ENCODE measurements at regions of chr6 and their contacts with region 1.

Region 1: DNA sequence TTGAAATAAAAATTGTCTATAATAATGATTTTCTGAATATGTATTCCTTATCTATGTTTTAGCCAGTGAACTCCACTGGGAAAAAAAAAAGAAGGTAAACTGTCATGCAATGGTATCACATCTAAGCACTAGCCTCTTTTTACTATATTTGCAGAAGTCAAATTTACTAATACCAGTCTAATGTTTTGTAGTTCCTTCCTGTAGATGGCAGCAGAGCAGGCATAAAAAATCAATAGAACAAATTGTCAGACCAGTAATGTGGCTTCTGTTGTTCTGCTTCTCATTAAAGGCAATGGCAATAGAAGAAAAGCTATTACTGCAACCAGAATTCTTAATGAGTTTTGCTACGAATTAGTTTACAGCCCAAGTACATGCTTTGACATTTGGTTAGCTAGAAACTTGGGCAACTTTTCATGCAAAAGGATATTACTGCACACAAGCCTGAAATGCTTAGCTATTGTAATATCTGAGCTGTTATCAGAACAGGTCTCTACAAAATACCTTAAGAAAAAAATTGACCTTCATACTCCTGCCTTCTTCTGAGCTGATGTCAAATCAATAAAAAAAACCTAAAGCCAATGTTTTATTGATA is 476.9 kb downstream of the KHDRBS2 start:
- DNase-seq: peak in 2 of 4 donors; percentile 30 to 58
- ATAC-seq: peak; percentile 69
- H3K4me3 ChIP-seq: no peak overlapping the region
- H3K27ac ChIP-seq: no peak overlapping the region
- H3K4me1 ChIP-seq: no peaks in the 10 kb centered on the region
- H3K27me3 ChIP-seq: no peaks in the 10 kb centered on the region
- CTCF ChIP-seq: peak; percentile 22 to 47

Region 2: GRCh38 chr6:61940919-61941318 is 131.8 kb after region 1 on chr6:
- intact Hi-C with region 1: no loop called
- DNase-seq: no peak
- ATAC-seq: no peak
- H3K4me3 ChIP-seq: no peak overlapping the region
- H3K27ac ChIP-seq: no peak overlapping the region
- H3K4me1 ChIP-seq: no peaks in the 10 kb centered on the region
- H3K27me3 ChIP-seq: no peaks in the 10 kb centered on the region
- CTCF ChIP-seq: no peak

Region 3: DNA sequence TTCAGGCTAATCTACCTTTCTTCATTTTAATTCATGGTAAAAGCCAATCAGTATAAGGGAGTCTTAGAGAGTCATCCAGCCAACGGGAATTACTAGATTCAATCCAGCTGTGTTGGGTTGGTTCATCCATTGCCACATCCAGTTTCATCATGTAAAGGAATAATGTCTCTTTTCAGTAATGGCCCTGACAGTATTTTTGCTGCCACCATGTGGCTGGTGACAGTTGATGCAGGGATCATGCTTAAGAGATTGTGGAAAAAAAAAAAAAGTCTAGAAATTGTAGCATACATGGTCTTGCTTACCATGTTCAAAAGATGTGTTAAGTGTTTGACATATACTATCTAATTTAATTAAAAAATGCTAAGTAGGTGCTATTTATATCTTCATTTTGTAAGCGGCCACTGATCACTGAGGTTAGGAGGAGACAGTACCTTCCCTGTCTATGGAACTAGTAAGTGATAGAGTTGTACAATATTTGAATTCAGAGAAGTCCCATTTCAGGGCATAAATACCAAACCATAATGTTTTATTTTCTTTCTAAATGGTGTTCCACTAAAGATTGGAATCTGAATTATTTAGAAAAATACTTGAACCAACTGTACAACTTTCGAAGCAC is 341.1 kb after region 1 on chr6:
- intact Hi-C with region 1: loop called in 1 of 2 experiments (anchors 10 kb)
- DNase-seq: peak in 1 of 4 donors; percentile 64
- ATAC-seq: peak; percentile 84
- H3K4me3 ChIP-seq: no peak overlapping the region
- H3K27ac ChIP-seq: no peak overlapping the region
- H3K4me1 ChIP-seq: peaks cover 3% of the 10 kb centered on the region in 2 donors
- H3K27me3 ChIP-seq: no peaks in the 10 kb centered on the region
- CTCF ChIP-seq: peak; percentile 49 to 65

Region 4: GRCh38 chr6:62285612-62286469 is 476.7 kb after region 1 on chr6 and contains the start of gene KHDRBS2:
- intact Hi-C with region 1: loop called in 1 of 2 experiments (anchors 10 kb)
- DNase-seq: peak; percentile 85 to 93 (median 92)
- ATAC-seq: peak; percentile 99
- H3K4me3 ChIP-seq: peak within 1 kb of the TSS; percentile 40 to 53
- H3K27ac ChIP-seq: peak within 1 kb of the TSS in 1 of 2 donors; percentile 69
- H3K4me1 ChIP-seq: peaks cover 5 to 6% of the 10 kb centered on the region in 2 donors
- H3K27me3 ChIP-seq: peaks cover 0 to 30% of the 10 kb centered on the region in 2 donors
- CTCF ChIP-seq: no peak
- polyA plus RNA-seq, gene KHDRBS2: 6.7 to 12.9 (median 9.1) TPM